ENCODE measurements at regions of chr9 and their contacts with region 1.

Region 1: DNA sequence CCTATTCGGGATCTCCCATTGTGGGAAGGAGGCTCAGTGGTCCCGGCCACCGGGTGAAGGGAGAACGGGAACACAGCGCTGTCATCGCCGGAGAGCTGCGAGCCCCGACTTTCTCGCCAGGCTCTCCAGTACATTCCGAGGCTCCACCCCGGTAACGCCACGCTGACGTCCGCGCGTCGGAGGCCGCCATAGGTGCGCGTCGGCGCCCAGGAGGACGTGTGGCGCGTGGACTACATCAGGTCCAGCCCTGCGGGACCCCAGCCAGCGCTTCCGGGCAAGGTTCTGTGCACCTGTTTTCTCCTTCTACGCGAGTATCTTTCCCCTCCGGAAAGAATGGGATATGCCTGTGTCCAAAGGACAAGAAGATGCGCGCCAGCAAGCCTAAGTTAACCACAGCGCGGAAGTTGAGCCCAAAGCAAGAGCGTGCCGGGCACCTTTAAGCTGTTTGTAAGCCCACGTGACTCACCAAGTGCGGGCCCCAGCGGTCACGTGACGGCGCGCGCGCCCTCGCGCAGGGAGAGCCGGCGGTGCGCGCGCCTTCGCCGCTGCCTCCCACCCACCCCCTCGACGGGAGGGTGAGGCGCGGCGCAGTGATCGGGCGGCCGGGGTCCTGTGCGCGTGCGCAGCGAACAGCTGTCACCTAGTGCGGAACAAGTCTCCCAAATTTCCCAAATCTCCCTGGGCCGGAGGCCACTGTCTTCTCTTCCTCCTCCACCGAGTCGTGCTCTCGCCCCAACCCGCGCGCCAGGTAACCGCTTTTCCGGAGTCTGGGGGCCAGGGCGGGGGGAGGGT is at the start of gene KDM4C:
- DNase-seq: peak; percentile 97
- ATAC-seq: peak; percentile 84
- H3K4me3 Mint-ChIP-seq: peak within 1 kb of the TSS; percentile 87
- H3K27ac Mint-ChIP-seq: peak within 1 kb of the TSS; percentile 99
- H3K4me1 Mint-ChIP-seq: peaks cover 26% of the 10 kb centered on the region
- H3K27me3 Mint-ChIP-seq: no peaks in the 10 kb centered on the region
- total RNA-seq, gene KDM4C: 31.7 to 33.1 TPM

Region 2: GRCh38 chr9:4792572-4793458 is 1964.8 kb before region 1 on chr9 and contains the start of gene RCL1:
- CTCF ChIA-PET with region 1: no interaction called
- POLR2A ChIA-PET with region 1: no interaction called
- intact Hi-C with region 1: loop called in 1 of 2 experiments (anchors 5 kb)
- DNase-seq: peak; percentile 98
- ATAC-seq: peak; percentile 96
- H3K4me3 Mint-ChIP-seq: peak within 1 kb of the TSS; percentile 97
- H3K27ac Mint-ChIP-seq: peak within 1 kb of the TSS; percentile 89
- H3K4me1 Mint-ChIP-seq: peaks cover 44% of the 10 kb centered on the region
- H3K27me3 Mint-ChIP-seq: no peaks in the 10 kb centered on the region
- total RNA-seq, gene RCL1: 27.0 to 36.4 TPM

Region 3: DNA sequence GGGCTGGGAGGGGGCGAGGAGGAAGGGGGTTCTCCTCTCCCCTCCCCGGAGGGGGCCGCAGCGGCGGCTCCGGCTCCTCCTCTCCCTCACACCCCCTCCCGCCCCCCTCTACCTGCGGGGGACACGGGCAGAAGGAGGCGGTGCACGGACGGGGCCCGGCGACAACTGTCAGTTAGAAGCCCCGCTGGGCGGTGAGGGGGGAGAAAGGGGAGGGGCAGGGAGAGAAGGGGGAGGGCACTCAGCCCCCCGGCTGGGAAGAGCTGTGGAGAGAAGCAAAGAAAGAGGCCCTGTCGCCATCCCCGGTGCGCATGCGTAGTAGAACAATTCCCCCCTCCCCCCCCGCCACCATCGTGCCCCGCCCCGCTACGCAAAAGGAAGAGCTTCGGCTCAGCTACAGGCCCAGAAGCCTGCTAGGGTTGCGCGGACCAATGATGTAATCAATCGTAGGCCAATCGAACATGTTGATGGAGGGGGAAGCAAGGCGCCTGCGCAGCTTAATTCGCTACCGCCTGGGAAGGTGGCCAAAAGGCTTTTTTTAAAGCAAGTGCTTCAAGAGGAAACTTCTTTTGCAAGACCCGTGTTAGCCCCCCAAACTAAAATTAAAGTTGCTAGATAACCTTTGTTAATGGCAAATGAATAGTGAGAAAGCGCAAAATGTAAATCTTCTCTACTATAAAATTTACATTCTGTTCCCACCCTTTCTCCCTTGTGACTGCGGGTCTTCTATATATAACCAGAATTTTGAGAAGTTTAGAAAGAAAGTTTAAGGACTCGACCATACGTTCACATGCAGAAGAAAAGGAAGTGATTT is 749.3 kb before region 1 on chr9:
- CTCF ChIA-PET with region 1: no interaction called
- POLR2A ChIA-PET with region 1: no interaction called
- intact Hi-C with region 1: loop called in 1 of 2 experiments (anchors 1 kb)
- DNase-seq: peak; percentile 96
- ATAC-seq: peak; percentile 77
- H3K4me3 Mint-ChIP-seq: peak overlapping the region; percentile 88
- H3K27ac Mint-ChIP-seq: peak overlapping the region; percentile 84
- H3K4me1 Mint-ChIP-seq: peaks cover 61% of the 10 kb centered on the region
- H3K27me3 Mint-ChIP-seq: no peaks in the 10 kb centered on the region

Region 4: GRCh38 chr9:6598249-6598725 is 159.4 kb before region 1 on chr9:
- CTCF ChIA-PET with region 1: no interaction called
- POLR2A ChIA-PET with region 1: no interaction called
- intact Hi-C with region 1: loop called (anchors 1 to 2 kb)
- DNase-seq: peak; percentile 66
- ATAC-seq: peak; percentile 95
- H3K4me3 Mint-ChIP-seq: no peak overlapping the region
- H3K27ac Mint-ChIP-seq: peak overlapping the region; percentile 80
- H3K4me1 Mint-ChIP-seq: peaks cover 10% of the 10 kb centered on the region
- H3K27me3 Mint-ChIP-seq: peaks cover 2% of the 10 kb centered on the region

Region 5: GRCh38 chr9:6703898-6704639 is 53.6 kb before region 1 on chr9:
- CTCF ChIA-PET with region 1: no interaction called
- POLR2A ChIA-PET with region 1: interaction called, 7 read pairs
- intact Hi-C with region 1: loop called (anchors 1 kb)
- DNase-seq: peak; percentile 93
- ATAC-seq: peak; percentile 88
- H3K4me3 Mint-ChIP-seq: peak overlapping the region; percentile 75
- H3K27ac Mint-ChIP-seq: peak overlapping the region; percentile 77
- H3K4me1 Mint-ChIP-seq: peaks cover 14% of the 10 kb centered on the region
- H3K27me3 Mint-ChIP-seq: no peaks in the 10 kb centered on the region

Region 6: GRCh38 chr9:7287065-7287464 is 529.4 kb after region 1 on chr9:
- CTCF ChIA-PET with region 1: no interaction called
- POLR2A ChIA-PET with region 1: no interaction called
- intact Hi-C with region 1: no loop called
- DNase-seq: no peak
- ATAC-seq: no peak
- H3K4me3 Mint-ChIP-seq: no peak overlapping the region
- H3K27ac Mint-ChIP-seq: no peak overlapping the region
- H3K4me1 Mint-ChIP-seq: peaks cover 3% of the 10 kb centered on the region
- H3K27me3 Mint-ChIP-seq: peaks cover 42% of the 10 kb centered on the region

Region 7: GRCh38 chr9:7298123-7298522 is 540.5 kb after region 1 on chr9:
- CTCF ChIA-PET with region 1: no interaction called
- POLR2A ChIA-PET with region 1: no interaction called
- intact Hi-C with region 1: loop called in 1 of 2 experiments (anchors 5 kb)
- DNase-seq: peak; percentile 76
- ATAC-seq: peak; percentile 95
- H3K4me3 Mint-ChIP-seq: no peak overlapping the region
- H3K27ac Mint-ChIP-seq: peak overlapping the region; percentile 7
- H3K4me1 Mint-ChIP-seq: peaks cover 20% of the 10 kb centered on the region
- H3K27me3 Mint-ChIP-seq: peaks cover 29% of the 10 kb centered on the region

Region 8: GRCh38 chr9:7976167-7976755 is 1218.6 kb after region 1 on chr9:
- CTCF ChIA-PET with region 1: no interaction called
- POLR2A ChIA-PET with region 1: no interaction called
- intact Hi-C with region 1: loop called in 1 of 2 experiments (anchors 10 kb)
- DNase-seq: peak; percentile 60
- ATAC-seq: peak; percentile 95
- H3K4me3 Mint-ChIP-seq: peak overlapping the region; percentile 32
- H3K27ac Mint-ChIP-seq: peak overlapping the region; percentile 82
- H3K4me1 Mint-ChIP-seq: peaks cover 62% of the 10 kb centered on the region
- H3K27me3 Mint-ChIP-seq: no peaks in the 10 kb centered on the region

Measured in activated CD4-positive, alpha-beta T cell treated with anti-CD3 and anti-CD28 coated beads for 36 hours (primary cell).